ENCODE measurements at regions of chr7 and their contacts with region 1.

Region 1: GRCh38 chr7:87391020-87391701 is 45.7 kb downstream of the CROT start:
- DNase-seq: no peak
- H3K4me3 Mint-ChIP-seq: no peak overlapping the region
- H3K27ac Mint-ChIP-seq: no peak overlapping the region
- H3K4me1 Mint-ChIP-seq: peaks cover 23% of the 10 kb centered on the region
- H3K27me3 Mint-ChIP-seq: no peaks in the 10 kb centered on the region

Region 2: DNA sequence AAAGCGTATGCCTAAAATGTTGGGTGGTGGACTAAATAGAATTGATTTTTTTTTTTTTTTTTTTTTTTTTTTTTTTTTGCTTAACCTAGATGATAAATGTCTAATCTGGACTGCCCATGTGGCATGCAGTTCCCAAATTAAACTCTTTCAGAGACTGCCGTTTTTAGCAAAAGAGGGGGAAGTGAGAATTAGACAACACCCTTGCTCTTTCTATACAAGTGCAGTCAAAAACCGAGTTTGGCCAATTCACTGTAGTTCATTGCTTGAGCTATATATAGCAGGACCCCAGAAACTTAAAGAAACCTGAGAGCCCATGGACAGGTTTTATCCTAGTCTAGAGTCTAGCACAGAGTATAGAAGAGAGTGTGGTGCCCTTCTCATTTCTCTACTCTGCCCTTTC is 605.5 kb before region 1 on chr7:
- intact Hi-C with region 1: no loop called
- DNase-seq: no peak
- H3K4me3 Mint-ChIP-seq: no peak overlapping the region
- H3K27ac Mint-ChIP-seq: no peak overlapping the region
- H3K4me1 Mint-ChIP-seq: no peaks in the 10 kb centered on the region
- H3K27me3 Mint-ChIP-seq: no peaks in the 10 kb centered on the region

Region 3: GRCh38 chr7:87354749-87355148 is 36.4 kb before region 1 on chr7:
- intact Hi-C with region 1: loop called (anchors 5 kb)
- DNase-seq: no peak
- H3K4me3 Mint-ChIP-seq: no peak overlapping the region
- H3K27ac Mint-ChIP-seq: no peak overlapping the region
- H3K4me1 Mint-ChIP-seq: no peaks in the 10 kb centered on the region
- H3K27me3 Mint-ChIP-seq: no peaks in the 10 kb centered on the region

Region 4: GRCh38 chr7:87435546-87435945 is 44.4 kb after region 1 on chr7:
- intact Hi-C with region 1: no loop called
- DNase-seq: no peak
- H3K4me3 Mint-ChIP-seq: no peak overlapping the region
- H3K27ac Mint-ChIP-seq: no peak overlapping the region
- H3K4me1 Mint-ChIP-seq: no peaks in the 10 kb centered on the region
- H3K27me3 Mint-ChIP-seq: peaks cover 2% of the 10 kb centered on the region

Measured in activated T-helper 2 cell treated with anti-CD3 and anti-CD28 coated beads, Interferon-gamma antibody, Interleukin-2, Interleukin-4, amounts not matched to agents 10 μg/mL and 5 μg/mL and 100 μg/mL, durations not matched to agents 14 hours and 24 hours and 36 hours (primary cell).